Activated CD4-positive, alpha-beta T cell treated with anti-CD3 and anti-CD28 coated beads, Interleukin-2, amount 10 ng/mL, durations not matched to agents 24 days and 14 days (primary cell): ENCODE measurements at regions of chr3 and their contacts with region 1.

Region 1: GRCh38 chr3:108388136-108389132 is 92.1 kb downstream of the HHLA2 start:
- DNase-seq: no peak
- H3K4me3 Mint-ChIP-seq: peak overlapping the region; percentile 13
- H3K27ac Mint-ChIP-seq: peak overlapping the region; percentile 80
- H3K4me1 Mint-ChIP-seq: peaks cover 18% of the 10 kb centered on the region
- H3K27me3 Mint-ChIP-seq: peaks cover 11% of the 10 kb centered on the region

Region 2: DNA sequence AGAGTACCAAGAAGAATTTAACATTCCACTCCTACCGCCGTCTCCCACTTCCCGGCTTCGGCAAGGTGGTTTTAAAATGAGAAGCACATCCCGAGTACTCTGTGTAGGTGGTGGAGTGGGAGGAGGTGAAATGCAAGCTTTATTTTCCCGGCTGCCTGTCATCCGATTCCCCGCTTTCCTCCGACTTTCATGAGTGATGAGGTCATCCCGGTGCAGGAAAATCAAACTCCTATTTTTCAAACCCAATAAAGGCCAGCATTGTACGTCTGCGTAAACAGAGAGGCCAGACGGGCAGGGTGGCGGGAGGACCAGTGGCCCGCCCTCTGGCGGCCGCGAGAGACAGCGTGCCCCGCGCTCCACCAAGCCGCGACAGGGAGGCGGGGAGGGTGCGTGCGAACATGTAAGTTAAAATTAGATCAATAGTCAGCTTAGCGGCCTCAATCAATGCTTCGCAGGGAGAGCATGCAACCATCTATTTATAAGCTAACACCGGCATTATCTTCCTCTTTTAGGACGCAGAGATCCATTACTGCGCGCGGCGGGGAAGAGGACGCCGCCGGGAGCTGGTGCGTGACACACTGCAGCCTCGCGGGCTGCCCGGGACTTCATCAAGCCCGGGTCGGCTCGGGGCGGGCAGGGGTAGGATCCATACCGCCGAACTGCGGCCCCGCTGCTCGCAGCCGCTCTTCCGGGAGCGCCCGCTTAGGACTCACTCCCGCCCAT is 460.9 kb before region 1 on chr3:
- intact Hi-C with region 1: loop called (anchors 5 kb)
- DNase-seq: peak; percentile 90
- H3K4me3 Mint-ChIP-seq: peak overlapping the region; percentile 87
- H3K27ac Mint-ChIP-seq: peak overlapping the region; percentile 59
- H3K4me1 Mint-ChIP-seq: peaks cover 13% of the 10 kb centered on the region
- H3K27me3 Mint-ChIP-seq: peaks cover 19% of the 10 kb centered on the region

Region 3: GRCh38 chr3:108130701-108131474 is 257.5 kb before region 1 on chr3:
- intact Hi-C with region 1: loop called (anchors 5 kb)
- DNase-seq: no peak
- H3K4me3 Mint-ChIP-seq: peak overlapping the region; percentile 57
- H3K27ac Mint-ChIP-seq: peak overlapping the region; percentile 78
- H3K4me1 Mint-ChIP-seq: peaks cover 81% of the 10 kb centered on the region
- H3K27me3 Mint-ChIP-seq: no peaks in the 10 kb centered on the region

Region 4: DNA sequence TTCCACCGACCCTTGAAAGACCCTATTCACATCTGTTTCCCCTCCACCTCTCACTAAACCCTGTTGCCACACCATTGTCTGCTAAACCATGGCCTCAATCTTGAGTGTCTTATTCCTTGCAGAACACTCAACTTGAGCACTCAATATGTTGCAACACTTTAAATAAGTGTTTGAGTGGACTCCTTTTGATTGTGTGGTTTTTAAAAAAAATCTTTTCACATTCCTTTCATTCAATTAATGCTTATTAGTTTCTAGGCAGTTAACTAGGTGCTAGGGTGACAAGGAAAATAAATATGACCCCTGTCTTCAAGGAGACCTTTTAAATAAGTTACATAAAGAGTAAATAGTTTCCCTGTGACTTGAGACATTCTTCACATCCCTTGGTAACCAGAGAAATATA is 105.4 kb before region 1 on chr3:
- intact Hi-C with region 1: no loop called
- DNase-seq: no peak
- H3K4me3 Mint-ChIP-seq: no peak overlapping the region
- H3K27ac Mint-ChIP-seq: no peak overlapping the region
- H3K4me1 Mint-ChIP-seq: peaks cover 19% of the 10 kb centered on the region
- H3K27me3 Mint-ChIP-seq: no peaks in the 10 kb centered on the region

Region 5: DNA sequence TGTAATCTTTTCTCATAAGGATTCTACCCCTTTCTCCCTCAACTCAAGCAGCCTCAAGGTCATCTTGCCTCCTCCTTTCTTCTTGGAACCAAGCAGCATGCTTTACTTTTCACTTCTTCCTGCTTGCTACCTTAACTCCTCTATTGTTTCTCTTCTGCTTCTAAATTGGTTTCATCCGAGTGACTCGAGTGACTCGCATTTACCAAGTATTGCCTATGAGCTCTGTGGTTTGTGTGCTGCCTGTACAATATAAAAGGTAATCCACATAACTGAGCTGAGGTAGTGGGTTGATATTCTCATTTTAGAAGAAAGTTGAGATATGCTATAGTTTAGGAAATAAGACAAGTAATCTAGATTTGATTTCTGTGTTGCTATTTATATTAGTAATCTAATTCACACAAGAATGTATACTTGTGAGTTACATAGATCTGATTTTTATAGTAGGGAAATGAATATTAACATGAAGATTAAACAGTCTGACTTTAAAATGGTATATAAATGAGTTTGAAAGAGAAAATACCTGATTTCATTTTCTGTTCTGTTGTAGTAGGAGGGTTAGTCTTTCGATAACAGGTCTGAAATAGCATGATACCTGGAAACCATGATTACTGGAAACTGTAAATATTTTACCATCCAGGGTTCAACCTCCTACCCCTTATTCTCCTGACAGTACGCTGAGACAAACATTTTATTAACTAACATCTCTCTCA is 86.6 kb before region 1 on chr3:
- intact Hi-C with region 1: loop called (anchors 1 kb)
- DNase-seq: peak; percentile 76
- H3K4me3 Mint-ChIP-seq: peak overlapping the region; percentile 73
- H3K27ac Mint-ChIP-seq: peak overlapping the region; percentile 84
- H3K4me1 Mint-ChIP-seq: peaks cover 48% of the 10 kb centered on the region
- H3K27me3 Mint-ChIP-seq: no peaks in the 10 kb centered on the region

Region 6: GRCh38 chr3:108342837-108343478 is 45.5 kb before region 1 on chr3:
- intact Hi-C with region 1: loop called (anchors 1 kb)
- DNase-seq: peak; percentile 58
- H3K4me3 Mint-ChIP-seq: peak overlapping the region; percentile 15
- H3K27ac Mint-ChIP-seq: peak overlapping the region; percentile 79
- H3K4me1 Mint-ChIP-seq: peaks cover 23% of the 10 kb centered on the region
- H3K27me3 Mint-ChIP-seq: peaks cover 7% of the 10 kb centered on the region